Thyroid gland (tissue), 4 donors: ENCODE measurements at regions of chr3 and their contacts with region 1.

Region 1: DNA sequence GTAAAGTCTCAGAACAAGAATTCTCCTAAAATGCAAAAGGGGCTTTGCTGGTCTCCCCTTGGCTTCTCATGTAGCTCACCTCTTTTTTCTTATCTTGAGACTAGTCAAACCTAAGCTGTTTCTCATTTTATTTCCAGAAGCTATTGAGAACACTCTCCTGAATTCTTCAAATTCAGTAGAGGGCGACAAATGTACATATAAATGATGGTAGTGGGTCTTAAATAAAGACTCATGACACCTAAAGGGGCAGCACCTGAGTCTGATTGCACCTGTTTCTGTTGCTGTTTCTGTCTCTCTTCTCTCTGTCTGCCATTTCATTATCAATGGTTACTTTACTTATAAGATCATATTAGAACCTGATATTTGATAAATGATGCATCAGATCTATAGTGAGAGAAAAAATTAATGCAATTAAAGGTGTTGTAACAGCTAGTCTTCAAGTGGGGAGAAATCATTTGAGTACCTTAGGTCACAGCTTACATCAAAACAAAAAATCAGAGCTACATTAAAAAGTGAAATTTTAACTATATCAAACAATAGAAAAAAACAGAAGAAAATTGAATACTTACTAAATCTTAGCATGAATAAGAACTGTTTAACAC is 7.0 kb downstream of the ADIPOQ start:
- DNase-seq: no peak
- H3K4me3 ChIP-seq: no peak overlapping the region
- H3K27ac ChIP-seq: no peak overlapping the region
- H3K4me1 ChIP-seq: no peaks in the 10 kb centered on the region
- H3K27me3 ChIP-seq: no peaks in the 10 kb centered on the region
- CTCF ChIP-seq: peak in 5 of 6 experiments; percentile 23 to 73 (median 55)
- POLR2A ChIP-seq: no peak

Region 2: GRCh38 chr3:186930641-186931531 is 81.4 kb after region 1 on chr3:
- intact Hi-C with region 1: loop called (anchors 5 kb)
- DNase-seq: peak; percentile 75 to 79
- H3K4me3 ChIP-seq: peak overlapping the region; percentile 47 to 97 (median 94)
- H3K27ac ChIP-seq: peak overlapping the region; percentile 82 to 93 (median 89)
- H3K4me1 ChIP-seq: peaks cover 18 to 23% of the 10 kb centered on the region in 2 donors
- H3K27me3 ChIP-seq: no peaks in the 10 kb centered on the region
- CTCF ChIP-seq: peak in 2 of 6 experiments; percentile 5 to 14
- POLR2A ChIP-seq: peak in 1 of 2 donors; percentile 59

Region 3: DNA sequence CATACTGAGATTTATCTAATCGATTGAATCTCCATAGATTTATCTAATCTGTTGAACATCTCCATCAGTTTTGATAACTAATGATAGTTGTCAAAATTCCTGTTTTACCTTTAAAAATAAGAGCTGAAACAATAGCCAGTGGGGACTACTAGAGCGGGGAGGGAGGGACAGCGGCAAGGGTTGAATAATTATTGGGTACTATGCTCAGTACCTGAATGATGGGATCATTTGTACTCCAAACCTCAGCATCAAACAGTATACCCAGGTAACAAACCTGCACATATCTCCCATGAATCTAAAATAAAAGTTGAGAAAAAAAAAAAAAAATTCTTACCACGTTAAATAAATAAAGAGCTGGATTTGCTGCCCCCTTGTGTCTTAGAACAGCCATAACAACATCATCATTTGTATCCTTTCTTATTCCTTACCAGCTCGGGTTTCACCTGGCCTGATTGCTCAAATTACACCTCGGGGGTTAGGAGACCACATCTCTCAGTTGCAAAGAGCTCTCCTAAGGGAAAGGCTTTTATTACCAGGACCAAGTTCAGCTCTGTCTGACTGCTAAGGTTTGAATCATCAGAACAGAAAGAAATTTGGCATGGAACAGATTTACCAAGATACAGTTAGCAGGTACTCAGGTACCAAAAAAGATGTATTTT is 315.5 kb after region 1 on chr3:
- intact Hi-C with region 1: loop called (anchors 2 kb)
- DNase-seq: peak; percentile 23 to 26
- H3K4me3 ChIP-seq: no peak overlapping the region
- H3K27ac ChIP-seq: no peak overlapping the region
- H3K4me1 ChIP-seq: no peaks in the 10 kb centered on the region
- H3K27me3 ChIP-seq: no peaks in the 10 kb centered on the region
- CTCF ChIP-seq: peak; percentile 44 to 90 (median 60)
- POLR2A ChIP-seq: no peak